ENCODE measurements at regions of chr9 and their contacts with region 1.

Region 1: GRCh38 chr9:90720621-90721285 is 78.1 kb upstream of the DIRAS2 start:
- DNase-seq: no peak
- H3K4me3 ChIP-seq: no peak overlapping the region
- H3K27ac ChIP-seq: no peak overlapping the region
- H3K4me1 ChIP-seq: no peaks in the 10 kb centered on the region
- H3K27me3 ChIP-seq: no peaks in the 10 kb centered on the region
- CTCF ChIP-seq: no peak

Region 2: GRCh38 chr9:90479701-90480100 is 241.1 kb before region 1 on chr9:
- CTCF ChIA-PET with region 1: interaction called, 20 read pairs
- POLR2A ChIA-PET with region 1: no interaction called
- intact Hi-C with region 1: no loop called
- DNase-seq: no peak
- H3K4me3 ChIP-seq: no peak overlapping the region
- H3K27ac ChIP-seq: no peak overlapping the region
- H3K4me1 ChIP-seq: 0 out of 2 replicates have a peak, but pooled peaks cover 5% of the 10 kb centered on the region
- H3K27me3 ChIP-seq: no peaks in the 10 kb centered on the region
- CTCF ChIP-seq: no peak

Region 3: GRCh38 chr9:90946975-90947374 is 226.2 kb after region 1 on chr9:
- CTCF ChIA-PET with region 1: no interaction called
- POLR2A ChIA-PET with region 1: no interaction called
- intact Hi-C with region 1: no loop called
- DNase-seq: peak; percentile 58 to 86
- H3K4me3 ChIP-seq: no peak overlapping the region
- H3K27ac ChIP-seq: peak overlapping the region; percentile 43; the same call in 1 of the 2 replicates
- H3K4me1 ChIP-seq: peaks cover 52% of the 10 kb centered on the region
- H3K27me3 ChIP-seq: no peaks in the 10 kb centered on the region
- CTCF ChIP-seq: no peak

Measured in PC-9 (cell line).